ENCODE measurements at regions of chr2 and their contacts with region 1.

Region 1: GRCh38 chr2:227406177-227407031 is 18.7 kb upstream of the SCYGR1 start:
- DNase-seq: peak in 1 of 2 donors; percentile 87
- H3K4me3 ChIP-seq: peak overlapping the region in 1 of 2 donors; percentile 10
- H3K27ac ChIP-seq: peak overlapping the region; percentile 67 to 84
- H3K4me1 ChIP-seq: peaks cover 0 to 10% of the 10 kb centered on the region in 2 donors
- H3K27me3 ChIP-seq: no peaks in the 10 kb centered on the region
- CTCF ChIP-seq: peak; percentile 57 to 74 (median 63)

Region 2: DNA sequence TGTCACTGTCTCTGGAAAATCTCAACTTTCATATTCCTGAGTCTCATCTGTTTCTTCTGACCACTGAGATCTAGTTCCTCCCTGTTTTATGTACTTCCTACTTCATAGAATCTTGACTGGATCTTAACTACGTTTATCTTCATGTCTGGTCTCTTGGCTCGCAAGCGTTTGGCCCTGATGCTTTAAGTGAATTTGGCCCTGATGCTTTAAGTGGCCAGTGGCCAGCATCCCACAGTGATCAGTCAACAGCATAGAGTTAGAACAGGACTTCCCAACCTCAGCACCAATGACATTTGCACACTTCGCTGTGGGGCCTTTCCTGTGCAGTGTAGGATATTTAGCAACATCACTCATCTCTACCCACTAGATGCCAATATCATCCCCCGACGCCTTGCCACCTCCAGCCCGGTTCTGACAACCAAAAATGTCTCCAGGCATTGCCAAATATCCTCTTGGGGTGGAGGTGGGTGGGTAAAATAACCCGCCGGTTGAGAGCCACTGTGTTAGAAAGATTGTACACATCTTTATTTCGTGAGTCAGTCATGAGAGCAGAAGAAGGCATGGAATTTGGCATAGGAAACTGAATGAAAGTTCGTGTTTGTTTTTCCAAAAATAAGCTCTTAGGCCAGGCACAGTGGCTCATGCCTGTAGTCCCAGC is 39.5 kb before region 1 on chr2:
- intact Hi-C with region 1: loop called (anchors 2 kb)
- DNase-seq: peak in 1 of 2 donors; percentile 83
- H3K4me3 ChIP-seq: no peak overlapping the region
- H3K27ac ChIP-seq: peak overlapping the region; percentile 51 to 85
- H3K4me1 ChIP-seq: peaks cover 0 to 34% of the 10 kb centered on the region in 2 donors
- H3K27me3 ChIP-seq: no peaks in the 10 kb centered on the region
- CTCF ChIP-seq: no peak

Region 3: GRCh38 chr2:227655454-227655853 is 249.1 kb after region 1 on chr2:
- intact Hi-C with region 1: loop called (anchors 10 kb)
- DNase-seq: no peak
- H3K4me3 ChIP-seq: no peak overlapping the region
- H3K27ac ChIP-seq: no peak overlapping the region
- H3K4me1 ChIP-seq: peaks cover 0 to 3% of the 10 kb centered on the region in 2 donors
- H3K27me3 ChIP-seq: no peaks in the 10 kb centered on the region
- CTCF ChIP-seq: no peak

Region 4: DNA sequence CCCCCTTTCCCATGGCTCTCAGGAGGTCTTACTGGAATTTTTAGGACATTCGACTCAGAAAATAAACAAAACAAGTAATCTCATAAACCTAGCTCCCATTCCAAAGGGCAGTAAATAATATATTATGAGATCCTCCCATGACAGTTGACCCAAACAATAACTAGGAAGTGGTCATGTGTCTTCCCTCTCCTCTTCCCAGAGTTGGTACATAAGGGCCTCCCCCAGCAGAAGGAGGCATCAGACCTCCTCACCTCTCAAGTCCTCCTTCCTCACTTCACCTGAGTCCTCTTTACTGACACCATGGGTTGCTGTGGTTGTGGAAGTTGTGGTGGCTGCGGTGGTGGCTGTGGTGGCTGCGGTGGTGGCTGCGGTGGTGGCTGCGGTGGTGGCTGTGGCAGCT is 321.6 kb after region 1 on chr2 and contains the start of gene SCYGR7:
- intact Hi-C with region 1: no loop called
- DNase-seq: no peak
- H3K4me3 ChIP-seq: no peak within 1 kb of the TSS
- H3K27ac ChIP-seq: no peak within 1 kb of the TSS
- H3K4me1 ChIP-seq: no peaks in the 10 kb centered on the region
- H3K27me3 ChIP-seq: no peaks in the 10 kb centered on the region
- CTCF ChIP-seq: no peak
- total RNA-seq, gene SCYGR7: not detected

Region 5: GRCh38 chr2:227766373-227766883 is 360.0 kb after region 1 on chr2:
- intact Hi-C with region 1: loop called (anchors 1 kb)
- DNase-seq: peak in 1 of 2 donors; percentile 91
- H3K4me3 ChIP-seq: no peak overlapping the region
- H3K27ac ChIP-seq: peak overlapping the region; percentile 29 to 60
- H3K4me1 ChIP-seq: peaks cover 0 to 11% of the 10 kb centered on the region in 2 donors
- H3K27me3 ChIP-seq: no peaks in the 10 kb centered on the region
- CTCF ChIP-seq: peak; percentile 82 to 85 (median 85)

Region 6: GRCh38 chr2:227884511-227884947 is 478.1 kb after region 1 on chr2:
- intact Hi-C with region 1: loop called (anchors 10 kb)
- DNase-seq: peak in 1 of 2 donors; percentile 78
- H3K4me3 ChIP-seq: no peak overlapping the region
- H3K27ac ChIP-seq: no peak overlapping the region
- H3K4me1 ChIP-seq: peaks cover 0 to 8% of the 10 kb centered on the region in 2 donors
- H3K27me3 ChIP-seq: no peaks in the 10 kb centered on the region
- CTCF ChIP-seq: peak in 2 of 3 experiments; percentile 42 to 49

Measured in ascending aorta (tissue), 2 donors.